H1 (cell line): ENCODE measurements at regions of chr18 and their contacts with region 1.

Region 1: GRCh38 chr18:77207540-77207939 is 42.1 kb upstream of the GALR1 start:
- DNase-seq: no peak
- H3K4me3 ChIP-seq: no peak overlapping the region
- H3K27ac ChIP-seq: no peak overlapping the region
- H3K4me1 ChIP-seq: no peaks in the 10 kb centered on the region; a peak in 1 of 7 replicates
- H3K27me3 ChIP-seq: no peaks in the 10 kb centered on the region; a peak in 1 of 7 replicates
- CTCF ChIP-seq: peak; percentile 57 to 75 (median 63)
- EP300 ChIP-seq: no peak
- POLR2A ChIP-seq: no peak
- RAD21 ChIP-seq: peak; percentile 33 to 54

Region 2: GRCh38 chr18:77061946-77062517 is 145.5 kb before region 1 on chr18:
- CTCF ChIA-PET with region 1: interaction called, 11 read pairs
- POLR2A ChIA-PET with region 1: no interaction called
- DNase-seq: no peak
- H3K4me3 ChIP-seq: no peak overlapping the region
- H3K27ac ChIP-seq: no peak overlapping the region
- H3K4me1 ChIP-seq: peaks cover 1 to 11% (median 6%) of the 10 kb centered on the region in 4 experiments; a peak in 6 of 7 replicates
- H3K27me3 ChIP-seq: no peaks in the 10 kb centered on the region
- CTCF ChIP-seq: peak; percentile 41 to 71 (median 54)
- EP300 ChIP-seq: no peak
- POLR2A ChIP-seq: no peak
- RAD21 ChIP-seq: peak; percentile 68 to 77

Region 3: DNA sequence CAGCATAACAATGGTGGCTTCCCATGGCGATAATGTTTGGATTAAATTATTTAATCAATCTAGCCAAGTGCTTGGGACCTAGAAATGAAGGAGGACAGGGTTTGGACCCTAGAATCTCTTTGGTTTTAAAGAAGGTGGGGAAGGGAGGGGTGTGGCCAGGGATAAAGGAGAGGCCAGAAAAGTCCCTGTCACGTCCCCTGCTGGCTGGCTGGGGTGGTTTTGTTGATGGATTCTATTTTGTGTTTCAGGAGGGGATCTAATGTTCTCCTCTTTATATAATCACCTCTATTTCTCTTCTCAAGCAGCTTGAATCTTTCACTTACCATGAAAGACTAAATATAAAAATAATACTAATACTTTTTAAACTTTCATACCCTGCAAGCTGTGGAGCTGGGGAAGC is 10.5 kb before region 1 on chr18:
- CTCF ChIA-PET with region 1: interaction called, 45 read pairs
- POLR2A ChIA-PET with region 1: no interaction called
- DNase-seq: peak in 1 of 2 experiments; percentile 56
- H3K4me3 ChIP-seq: no peak overlapping the region
- H3K27ac ChIP-seq: no peak overlapping the region
- H3K4me1 ChIP-seq: no peaks in the 10 kb centered on the region
- H3K27me3 ChIP-seq: no peaks in the 10 kb centered on the region
- CTCF ChIP-seq: peak; percentile 50 to 60 (median 58)
- EP300 ChIP-seq: no peak
- POLR2A ChIP-seq: no peak
- RAD21 ChIP-seq: peak; percentile 59 to 65

Region 4: GRCh38 chr18:77223653-77224052 is 16.1 kb after region 1 on chr18:
- CTCF ChIA-PET with region 1: interaction called, 17 read pairs
- POLR2A ChIA-PET with region 1: no interaction called
- DNase-seq: no peak
- H3K4me3 ChIP-seq: no peak overlapping the region
- H3K27ac ChIP-seq: no peak overlapping the region
- H3K4me1 ChIP-seq: peaks cover 0 to 3% (median 0%) of the 10 kb centered on the region in 4 experiments; a peak in 1 of 7 replicates
- H3K27me3 ChIP-seq: no peaks in the 10 kb centered on the region
- CTCF ChIP-seq: no peak
- EP300 ChIP-seq: no peak
- POLR2A ChIP-seq: no peak
- RAD21 ChIP-seq: no peak

Region 5: DNA sequence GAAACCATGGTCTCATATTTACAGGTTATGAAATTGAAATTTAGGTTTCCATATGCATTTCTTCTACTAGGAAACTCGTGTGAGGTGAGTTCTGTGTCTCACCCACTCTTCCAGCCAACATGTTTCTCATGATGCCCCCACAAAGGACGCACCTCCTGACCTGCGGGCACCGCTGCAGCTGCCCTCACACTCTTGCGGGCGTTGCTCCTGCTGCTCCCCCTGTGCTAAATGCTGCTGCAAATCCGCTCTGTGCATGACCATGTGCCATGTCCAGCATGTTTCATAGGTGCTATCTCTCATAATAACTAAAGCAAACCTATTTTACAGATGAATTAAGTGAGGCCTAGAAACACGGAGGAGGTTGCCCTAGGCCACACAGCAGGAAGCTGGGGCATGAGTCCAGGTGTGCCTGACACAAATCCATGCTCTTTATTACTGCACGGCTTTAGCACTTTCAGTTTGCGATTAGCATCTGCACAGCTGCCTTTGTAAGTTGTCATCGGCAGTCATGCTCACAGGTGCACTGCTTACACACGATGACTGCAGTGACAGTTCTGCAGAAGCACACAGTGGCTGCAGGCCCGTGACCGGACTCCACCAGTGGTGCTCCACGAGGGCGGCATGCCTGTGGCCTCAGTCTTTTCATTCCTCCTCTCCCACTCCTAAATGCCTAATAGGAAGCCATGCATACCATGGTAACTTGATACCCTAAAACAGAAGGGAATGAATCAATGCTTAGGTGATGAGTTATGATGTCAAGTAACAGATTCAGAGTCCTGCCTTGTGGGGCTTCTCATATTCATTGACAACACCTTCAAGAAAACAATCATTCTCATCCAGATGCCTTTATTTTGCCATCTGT is 27.2 kb after region 1 on chr18:
- CTCF ChIA-PET with region 1: no interaction called
- POLR2A ChIA-PET with region 1: no interaction called
- DNase-seq: no peak
- H3K4me3 ChIP-seq: no peak overlapping the region
- H3K27ac ChIP-seq: no peak overlapping the region
- H3K4me1 ChIP-seq: no peaks in the 10 kb centered on the region
- H3K27me3 ChIP-seq: no peaks in the 10 kb centered on the region
- CTCF ChIP-seq: no peak
- EP300 ChIP-seq: no peak
- POLR2A ChIP-seq: no peak
- RAD21 ChIP-seq: no peak